Naive thymus-derived CD4-positive, alpha-beta T cell (primary cell): ENCODE measurements at regions of chr4 and their contacts with region 1.

Region 1: DNA sequence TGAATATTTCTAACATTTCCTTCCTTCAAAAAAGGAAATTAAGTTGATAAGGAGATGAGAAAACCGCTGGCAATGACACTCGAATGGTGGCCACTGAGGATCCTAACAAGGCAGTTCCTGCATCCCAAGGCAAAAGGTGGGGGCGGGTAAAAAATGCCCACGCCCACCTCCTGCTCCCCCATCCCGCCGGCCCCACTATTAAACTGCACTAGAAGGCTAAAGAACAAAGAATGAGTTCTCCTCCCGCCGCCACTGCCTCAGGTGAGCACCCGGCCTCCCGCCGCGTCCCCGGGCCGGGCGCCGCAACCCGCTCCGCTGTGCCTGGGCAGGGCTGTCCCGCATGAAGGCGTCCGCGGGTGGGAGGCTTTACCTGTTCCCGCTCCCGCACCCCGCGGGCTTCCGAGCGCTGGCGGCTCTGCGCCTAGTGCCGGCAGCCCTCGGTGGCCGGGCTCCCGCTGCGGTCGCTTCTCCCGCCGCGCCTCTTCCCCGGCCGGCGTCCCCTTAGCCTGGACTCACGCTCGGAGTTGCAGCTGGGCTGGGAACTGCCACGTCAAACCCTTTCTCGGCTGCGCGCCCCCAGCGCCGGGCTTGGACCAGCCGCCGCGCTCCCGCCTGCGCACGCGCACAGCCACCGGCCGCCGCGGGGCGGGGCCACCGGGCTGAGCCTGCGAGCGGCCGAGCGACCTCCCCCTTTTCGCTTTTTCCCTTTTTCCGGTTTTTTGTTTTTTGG is at the start of gene SEC24D:
- DNase-seq: peak; percentile 71 to 95 (median 80)
- ATAC-seq: peak; percentile 90
- H3K4me3 ChIP-seq: peak within 1 kb of the TSS; percentile 91
- H3K4me3 Mint-ChIP-seq: peak within 1 kb of the TSS; percentile 87 to 100 (median 99)
- H3K27ac ChIP-seq: peak within 1 kb of the TSS; percentile 87
- H3K27ac Mint-ChIP-seq: peak within 1 kb of the TSS; percentile 86 to 100 (median 96)
- H3K4me1 ChIP-seq: peaks cover 0 to 5% of the 10 kb centered on the region in 2 donors
- H3K4me1 Mint-ChIP-seq: peaks cover 15 to 31% (median 20%) of the 10 kb centered on the region in 7 donors
- H3K27me3 ChIP-seq: no peaks in the 10 kb centered on the region
- H3K27me3 Mint-ChIP-seq: peaks cover 0 to 4% (median 0%) of the 10 kb centered on the region in 5 donors
- total RNA-seq, gene SEC24D: 11.5 to 59.2 (median 16.4) TPM

Region 2: DNA sequence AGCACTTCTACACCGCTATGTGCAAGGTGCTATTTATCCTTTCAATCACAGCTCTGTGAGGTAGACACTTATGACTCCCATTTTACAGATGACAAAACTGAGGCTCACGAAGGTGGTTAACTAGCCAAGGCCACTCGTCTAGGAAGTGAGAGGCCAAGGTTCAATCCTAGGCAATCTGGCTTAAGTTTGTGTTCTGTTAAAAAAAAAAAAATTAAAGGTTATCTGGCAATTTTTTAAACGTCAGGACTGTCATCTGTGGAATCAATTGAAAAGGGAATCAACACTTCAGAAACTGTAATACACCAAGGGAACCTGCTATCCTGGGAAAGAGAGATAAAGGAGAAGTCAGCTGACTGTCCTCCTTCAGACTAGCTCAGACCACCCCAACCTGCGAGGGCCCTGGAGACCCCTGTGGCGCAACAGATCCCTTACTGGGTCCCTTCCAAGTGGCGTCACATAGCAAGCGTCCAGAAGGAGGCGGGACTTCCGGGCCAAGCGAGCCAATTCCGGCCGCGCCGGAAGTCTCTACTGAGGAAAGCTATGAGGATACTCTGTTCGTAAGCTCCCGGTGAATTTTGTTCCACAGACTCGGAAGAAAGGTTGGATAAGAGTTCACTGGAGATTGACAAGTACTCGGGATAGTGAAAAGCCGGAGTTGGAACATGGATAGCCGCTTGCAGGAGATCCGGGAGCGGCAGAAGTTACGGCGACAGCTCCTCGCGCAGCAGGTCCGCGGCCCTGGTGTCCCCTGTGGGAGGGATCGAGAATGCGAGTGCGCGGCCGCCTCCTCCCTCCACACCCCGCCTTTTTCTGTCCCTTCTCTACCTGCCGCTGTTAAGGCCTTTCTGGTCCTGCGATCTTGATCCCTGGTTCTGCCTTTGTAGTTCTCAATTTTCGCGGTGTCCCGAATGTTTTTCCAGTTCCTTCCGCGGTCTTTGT is 150.6 kb before region 1 on chr4 and contains the start of gene METTL14:
- CTCF ChIA-PET with region 1: no interaction called
- POLR2A ChIA-PET with region 1: no interaction called
- intact Hi-C with region 1: loop called (anchors 1 kb)
- DNase-seq: peak; percentile 71 to 86 (median 82)
- ATAC-seq: peak; percentile 96
- H3K4me3 ChIP-seq: peak within 1 kb of the TSS; percentile 84
- H3K4me3 Mint-ChIP-seq: peak within 1 kb of the TSS; percentile 91 to 99 (median 97)
- H3K27ac ChIP-seq: peak within 1 kb of the TSS; percentile 83
- H3K27ac Mint-ChIP-seq: peak within 1 kb of the TSS; percentile 84 to 99 (median 96)
- H3K4me1 ChIP-seq: peaks cover 13 to 14% of the 10 kb centered on the region in 2 donors
- H3K4me1 Mint-ChIP-seq: peaks cover 12 to 41% (median 33%) of the 10 kb centered on the region in 7 donors
- H3K27me3 ChIP-seq: no peaks in the 10 kb centered on the region
- H3K27me3 Mint-ChIP-seq: no peaks in the 10 kb centered on the region
- total RNA-seq, gene METTL14: 46.9 to 64.8 (median 48.7) TPM

Region 3: GRCh38 chr4:118821590-118822293 is 14.0 kb before region 1 on chr4:
- CTCF ChIA-PET with region 1: no interaction called
- POLR2A ChIA-PET with region 1: no interaction called
- intact Hi-C with region 1: no loop called
- DNase-seq: no peak
- ATAC-seq: no peak
- H3K4me3 ChIP-seq: no peak overlapping the region
- H3K4me3 Mint-ChIP-seq: no peak overlapping the region
- H3K27ac ChIP-seq: no peak overlapping the region
- H3K27ac Mint-ChIP-seq: no peak overlapping the region
- H3K4me1 ChIP-seq: peaks cover 0 to 2% of the 10 kb centered on the region in 2 donors
- H3K4me1 Mint-ChIP-seq: peaks cover 0 to 15% (median 4%) of the 10 kb centered on the region in 7 donors
- H3K27me3 ChIP-seq: no peaks in the 10 kb centered on the region
- H3K27me3 Mint-ChIP-seq: no peaks in the 10 kb centered on the region

Region 4: DNA sequence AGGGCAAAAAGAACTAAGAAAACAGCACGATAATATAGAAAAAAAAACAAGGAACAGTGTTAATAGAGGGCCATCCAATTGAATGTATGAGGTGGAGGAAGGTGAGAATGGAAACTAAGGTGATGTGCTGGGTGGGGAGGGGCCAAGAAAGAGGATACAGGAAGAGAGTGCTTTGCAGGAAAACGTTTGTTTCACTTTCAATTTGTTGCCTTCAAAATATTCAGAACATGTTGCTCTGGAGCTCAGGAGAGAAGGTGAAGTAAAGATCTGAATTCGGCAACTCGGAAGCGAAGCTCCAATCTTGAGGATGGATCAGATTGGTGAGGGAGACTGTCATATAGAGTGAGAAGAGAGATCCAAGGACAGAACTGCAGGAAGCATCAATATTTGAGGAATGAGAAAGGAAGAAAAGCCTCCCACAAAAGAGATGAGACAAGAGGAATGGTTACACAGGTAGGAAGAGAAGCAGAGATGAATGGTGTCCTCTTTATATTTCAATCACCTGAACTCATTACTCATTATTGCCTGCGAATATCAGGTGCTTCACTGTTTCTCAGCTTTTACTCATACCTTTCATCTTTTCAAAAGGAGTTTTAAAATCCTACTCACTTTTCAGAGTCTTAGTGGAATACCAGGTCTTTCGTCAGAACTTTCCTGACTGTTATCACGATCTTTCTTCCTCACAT is 14.9 kb after region 1 on chr4:
- CTCF ChIA-PET with region 1: interaction called, 3 read pairs
- POLR2A ChIA-PET with region 1: interaction called, 7 read pairs
- intact Hi-C with region 1: loop called (anchors 1 kb)
- DNase-seq: peak in 7 of 9 donors; percentile 49 to 65 (median 59)
- ATAC-seq: peak; percentile 93
- H3K4me3 ChIP-seq: peak overlapping the region; percentile 78
- H3K4me3 Mint-ChIP-seq: peak overlapping the region; percentile 86 to 99 (median 93)
- H3K27ac ChIP-seq: peak overlapping the region; percentile 73
- H3K27ac Mint-ChIP-seq: peak overlapping the region; percentile 92 to 99 (median 96)
- H3K4me1 ChIP-seq: peaks cover 0 to 9% of the 10 kb centered on the region in 2 donors
- H3K4me1 Mint-ChIP-seq: peaks cover 14 to 37% (median 28%) of the 10 kb centered on the region in 7 donors
- H3K27me3 ChIP-seq: no peaks in the 10 kb centered on the region
- H3K27me3 Mint-ChIP-seq: peaks cover 0 to 20% (median 3%) of the 10 kb centered on the region in 5 donors

Region 5: GRCh38 chr4:118888666-118889311 is 53.1 kb after region 1 on chr4 and contains the start of gene SYNPO2:
- CTCF ChIA-PET with region 1: no interaction called
- POLR2A ChIA-PET with region 1: no interaction called
- intact Hi-C with region 1: loop called (anchors 1 to 5 kb)
- DNase-seq: peak in 6 of 9 donors; percentile 9 to 33 (median 14)
- ATAC-seq: peak; percentile 66
- H3K4me3 ChIP-seq: peak within 1 kb of the TSS; percentile 46
- H3K4me3 Mint-ChIP-seq: peak within 1 kb of the TSS; percentile 61 to 85 (median 78)
- H3K27ac ChIP-seq: no peak within 1 kb of the TSS
- H3K27ac Mint-ChIP-seq: peak within 1 kb of the TSS in 1 of 9 donors; percentile 8
- H3K4me1 ChIP-seq: peaks cover 0 to 5% of the 10 kb centered on the region in 2 donors
- H3K4me1 Mint-ChIP-seq: peaks cover 10 to 21% (median 18%) of the 10 kb centered on the region in 7 donors
- H3K27me3 ChIP-seq: peaks cover 3 to 6% of the 10 kb centered on the region in 2 donors
- H3K27me3 Mint-ChIP-seq: peaks cover 26 to 51% (median 40%) of the 10 kb centered on the region in 5 donors
- total RNA-seq, gene SYNPO2: 0.61 to 1.1 (median 0.93) TPM

Region 6: DNA sequence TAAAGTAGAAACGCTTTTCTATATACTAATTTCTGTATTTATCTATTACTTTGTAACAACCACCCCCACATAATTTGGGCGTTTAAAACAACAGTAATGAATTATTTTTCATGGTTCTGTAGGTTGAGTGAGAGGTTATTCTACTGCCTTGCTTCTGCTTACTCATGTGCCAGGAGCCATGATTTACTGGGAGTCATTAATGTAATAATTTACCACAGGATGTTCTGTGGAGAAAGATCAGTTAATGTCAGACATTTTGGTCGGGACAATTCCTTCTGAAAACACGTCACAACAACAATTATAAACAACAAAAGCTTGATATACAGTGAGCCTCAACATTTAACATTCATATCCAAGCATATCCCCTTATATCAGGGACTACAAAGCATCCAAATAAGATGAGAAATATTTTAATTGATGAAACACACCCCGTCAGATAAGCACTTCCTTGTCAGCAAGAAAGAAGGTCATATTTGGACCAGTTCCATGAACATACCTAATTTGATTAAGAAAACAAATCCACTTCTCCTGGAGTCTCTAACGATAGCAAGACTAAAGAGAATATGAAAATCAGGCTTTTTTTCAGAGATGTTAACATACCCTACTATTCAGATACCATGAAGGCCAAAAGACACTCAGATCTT is 1848.3 kb after region 1 on chr4:
- CTCF ChIA-PET with region 1: no interaction called
- POLR2A ChIA-PET with region 1: no interaction called
- intact Hi-C with region 1: no loop called
- DNase-seq: no peak
- ATAC-seq: no peak
- H3K4me3 ChIP-seq: no peak overlapping the region
- H3K4me3 Mint-ChIP-seq: no peak overlapping the region
- H3K27ac ChIP-seq: no peak overlapping the region
- H3K27ac Mint-ChIP-seq: no peak overlapping the region
- H3K4me1 ChIP-seq: no peaks in the 10 kb centered on the region
- H3K4me1 Mint-ChIP-seq: peaks cover 0 to 2% (median 0%) of the 10 kb centered on the region in 7 donors
- H3K27me3 ChIP-seq: no peaks in the 10 kb centered on the region
- H3K27me3 Mint-ChIP-seq: peaks cover 3 to 9% (median 8%) of the 10 kb centered on the region in 5 donors